ENCODE measurements at regions of chr7 and their contacts with region 1.

Region 1: DNA sequence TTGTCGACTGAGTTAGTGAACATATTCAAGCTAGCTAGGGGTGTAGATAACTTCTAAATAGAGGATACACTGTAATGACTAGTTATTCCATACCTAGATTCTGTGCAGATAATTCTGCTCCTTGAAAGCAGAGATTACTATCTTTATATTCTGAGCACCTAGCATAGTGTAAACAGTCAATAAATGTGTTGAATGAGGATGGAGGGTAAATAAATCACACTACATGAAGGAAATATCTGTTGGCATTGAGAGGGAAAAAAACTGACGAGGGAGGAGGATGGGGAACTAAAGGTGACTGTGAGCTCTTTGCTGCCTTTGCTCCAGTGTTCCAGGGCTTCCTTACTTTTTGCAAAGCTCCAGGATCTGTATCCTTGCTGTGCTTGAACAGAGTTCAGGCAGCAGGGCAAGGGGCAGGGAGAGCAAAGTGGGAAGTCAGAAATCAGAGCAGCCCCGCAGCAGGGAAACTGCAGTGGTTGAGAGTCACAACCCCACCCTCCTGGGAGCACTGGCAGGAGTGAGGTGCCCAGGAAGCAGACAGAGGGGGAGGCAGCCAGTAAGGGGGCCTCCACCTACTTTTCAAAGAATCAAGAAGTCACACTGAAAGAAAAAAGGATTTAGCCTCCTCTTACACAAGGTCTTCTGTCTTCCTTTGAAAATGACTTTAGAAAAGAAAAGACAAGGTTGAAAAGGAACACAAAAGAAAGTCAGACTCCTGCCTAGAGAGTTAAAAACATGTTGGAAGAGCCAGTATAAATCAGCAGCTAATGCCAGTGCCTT is 71.8 kb upstream of the LRRN3 start:
- DNase-seq: no peak
- ATAC-seq: peak; percentile 48
- H3K4me3 ChIP-seq: peak overlapping the region; percentile 36
- H3K4me3 Mint-ChIP-seq: peak overlapping the region; percentile 52 to 82 (median 72)
- H3K27ac ChIP-seq: peak overlapping the region; percentile 54
- H3K27ac Mint-ChIP-seq: peak overlapping the region; percentile 53 to 98 (median 84)
- H3K4me1 ChIP-seq: peaks cover under 1 to 68% of the 10 kb centered on the region in 2 donors
- H3K4me1 Mint-ChIP-seq: peaks cover 32 to 91% (median 87%) of the 10 kb centered on the region in 7 donors
- H3K27me3 ChIP-seq: no peaks in the 10 kb centered on the region
- H3K27me3 Mint-ChIP-seq: no peaks in the 10 kb centered on the region

Region 2: GRCh38 chr7:111006691-111007090 is 12.5 kb before region 1 on chr7:
- CTCF ChIA-PET with region 1: interaction called, 4 read pairs
- POLR2A ChIA-PET with region 1: interaction called, 42 read pairs
- intact Hi-C with region 1: loop called in 1 of 2 experiments (anchors 1 kb)
- DNase-seq: no peak
- ATAC-seq: no peak
- H3K4me3 ChIP-seq: no peak overlapping the region
- H3K4me3 Mint-ChIP-seq: no peak overlapping the region
- H3K27ac ChIP-seq: no peak overlapping the region
- H3K27ac Mint-ChIP-seq: no peak overlapping the region
- H3K4me1 ChIP-seq: peaks cover 0 to 44% of the 10 kb centered on the region in 2 donors
- H3K4me1 Mint-ChIP-seq: peaks cover 10 to 34% (median 14%) of the 10 kb centered on the region in 7 donors
- H3K27me3 ChIP-seq: no peaks in the 10 kb centered on the region
- H3K27me3 Mint-ChIP-seq: no peaks in the 10 kb centered on the region

Region 3: DNA sequence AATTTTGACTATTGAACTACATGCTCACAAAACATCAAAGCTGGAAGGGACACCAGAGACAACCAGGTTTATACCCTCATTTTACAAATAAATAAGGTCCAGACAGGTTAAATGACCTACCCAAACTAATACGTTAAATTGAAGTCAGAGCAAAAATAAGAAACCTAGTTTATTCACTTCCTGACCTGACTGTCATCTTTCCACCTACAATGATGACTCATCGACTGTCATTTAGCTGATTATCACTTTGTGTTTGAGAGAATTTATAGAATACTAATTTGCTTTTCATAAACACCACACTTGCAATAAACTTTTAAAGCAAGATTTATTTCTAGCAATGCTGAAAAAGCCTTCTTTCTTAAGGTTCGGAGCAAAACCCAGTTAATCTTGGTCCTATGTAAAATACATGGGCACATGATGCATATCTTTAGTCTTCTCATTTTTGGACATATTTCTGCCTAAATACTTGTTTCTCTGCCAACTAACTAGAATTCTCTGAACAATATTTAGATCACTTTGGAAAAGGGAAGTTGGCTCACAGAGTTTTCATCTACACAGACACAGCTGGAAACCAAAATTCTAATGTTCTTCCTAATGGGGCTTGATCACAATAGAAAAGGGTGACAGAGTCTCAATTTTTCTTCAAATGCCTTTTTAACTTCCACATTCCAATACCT is 55.1 kb after region 1 on chr7:
- CTCF ChIA-PET with region 1: interaction called, 4 read pairs
- POLR2A ChIA-PET with region 1: interaction called, 3 read pairs
- intact Hi-C with region 1: loop called in 1 of 2 experiments (anchors 1 kb)
- DNase-seq: no peak
- ATAC-seq: no peak
- H3K4me3 ChIP-seq: no peak overlapping the region
- H3K4me3 Mint-ChIP-seq: peak overlapping the region in 6 of 10 donors; percentile 11 to 40 (median 19)
- H3K27ac ChIP-seq: no peak overlapping the region
- H3K27ac Mint-ChIP-seq: peak overlapping the region in 4 of 9 donors; percentile 4 to 78 (median 34)
- H3K4me1 ChIP-seq: peaks cover 5 to 34% of the 10 kb centered on the region in 2 donors
- H3K4me1 Mint-ChIP-seq: peaks cover 10 to 82% (median 73%) of the 10 kb centered on the region in 7 donors
- H3K27me3 ChIP-seq: no peaks in the 10 kb centered on the region
- H3K27me3 Mint-ChIP-seq: no peaks in the 10 kb centered on the region

Measured in naive thymus-derived CD4-positive, alpha-beta T cell (primary cell).